Mammary epithelial cell (primary cell): ENCODE measurements at regions of chr19 and their contacts with region 1.

Region 1: DNA sequence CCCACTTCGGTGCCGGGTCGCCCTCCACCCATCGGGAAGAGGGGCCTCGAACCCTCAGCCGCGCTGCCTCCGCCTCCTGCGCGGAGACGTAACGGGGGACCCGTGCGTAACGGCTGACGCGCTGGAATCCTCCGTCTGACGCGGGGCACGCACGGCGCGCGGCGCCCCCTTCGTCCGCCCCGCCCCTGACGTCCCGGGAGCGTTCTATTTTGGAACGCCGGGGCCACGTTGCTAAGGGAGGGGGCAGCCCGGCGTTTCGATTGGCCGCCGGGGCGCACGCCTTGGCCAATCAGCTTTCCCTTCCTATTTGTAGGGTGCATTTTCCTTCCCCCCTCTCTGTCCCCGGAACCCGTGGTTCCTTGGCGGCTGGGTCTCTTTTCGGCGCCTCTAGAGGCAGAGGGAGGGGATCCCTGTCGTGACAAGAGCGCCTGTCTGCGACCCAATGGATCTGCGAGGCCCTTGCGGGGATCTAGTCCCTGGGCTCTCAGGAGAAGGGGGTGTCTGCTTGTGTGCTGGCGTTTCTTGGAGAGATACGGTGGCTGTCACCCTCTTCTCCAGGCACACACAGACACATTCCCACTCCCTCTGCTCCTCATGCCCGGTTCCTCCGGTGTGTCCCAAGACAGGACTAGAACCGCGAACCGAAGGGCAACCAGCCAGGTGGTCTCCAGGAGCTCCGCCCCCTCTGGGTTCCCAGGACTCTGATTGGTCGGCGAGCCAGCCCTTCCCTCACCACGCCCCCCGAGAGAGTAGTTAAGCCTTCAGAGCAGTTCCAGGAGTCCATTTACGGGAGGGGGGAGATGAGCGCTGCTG is 1.5 kb downstream of the FOSB start:
- DNase-seq: peak; percentile 95
- H3K4me3 ChIP-seq: peak overlapping the region; percentile 61 to 96 (median 62)
- H3K27ac ChIP-seq: peak overlapping the region; percentile 94
- H3K4me1 ChIP-seq: peaks cover 16% of the 10 kb centered on the region
- H3K27me3 ChIP-seq: no peaks in the 10 kb centered on the region
- CTCF ChIP-seq: no peak

Region 2: DNA sequence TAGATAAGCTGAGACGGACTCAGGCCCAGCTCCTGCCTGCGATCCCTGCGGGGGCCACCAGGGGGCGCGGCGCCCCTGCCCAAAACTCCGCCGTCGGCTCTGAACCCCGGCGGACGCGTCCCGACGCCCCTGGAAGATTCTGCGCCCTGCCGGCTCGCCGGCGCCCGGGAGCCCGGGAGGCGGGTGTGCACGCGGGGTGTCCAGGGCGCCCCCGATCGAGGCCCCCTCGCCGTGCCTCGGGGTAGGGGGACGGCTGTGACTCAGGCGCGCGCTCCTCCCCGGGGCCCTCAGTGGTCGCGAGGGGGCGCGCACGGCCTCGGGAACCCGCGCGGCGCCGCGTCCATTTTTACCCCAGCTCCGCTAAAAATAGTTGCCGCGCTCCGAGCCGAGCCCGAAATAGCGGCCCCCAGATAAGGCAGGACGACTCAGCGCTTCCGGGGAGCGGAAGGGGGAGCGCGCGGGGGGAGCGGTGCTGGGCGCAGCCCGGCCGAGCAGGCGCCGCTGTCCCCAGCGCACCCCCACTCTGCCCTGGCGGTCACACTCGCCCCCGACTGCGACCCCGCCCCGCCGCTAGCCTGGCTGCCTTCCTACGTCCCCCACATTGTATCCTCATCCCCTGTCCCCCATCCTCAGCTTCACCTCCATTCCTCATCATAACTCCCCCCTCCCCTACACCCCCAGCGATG is 29.6 kb before region 1 on chr19:
- CTCF ChIA-PET with region 1: interaction called, 14 read pairs
- dilution Hi-C with region 1: no loop called
- in situ Hi-C with region 1: no loop called
- intact Hi-C with region 1: loop called (anchors 1 kb)
- DNase-seq: peak; percentile 63
- H3K4me3 ChIP-seq: peak overlapping the region; percentile 55 to 58 (median 58)
- H3K27ac ChIP-seq: peak overlapping the region; percentile 61
- H3K4me1 ChIP-seq: peaks cover 14% of the 10 kb centered on the region
- H3K27me3 ChIP-seq: no peaks in the 10 kb centered on the region
- CTCF ChIP-seq: peak; percentile 84 to 88

Region 3: DNA sequence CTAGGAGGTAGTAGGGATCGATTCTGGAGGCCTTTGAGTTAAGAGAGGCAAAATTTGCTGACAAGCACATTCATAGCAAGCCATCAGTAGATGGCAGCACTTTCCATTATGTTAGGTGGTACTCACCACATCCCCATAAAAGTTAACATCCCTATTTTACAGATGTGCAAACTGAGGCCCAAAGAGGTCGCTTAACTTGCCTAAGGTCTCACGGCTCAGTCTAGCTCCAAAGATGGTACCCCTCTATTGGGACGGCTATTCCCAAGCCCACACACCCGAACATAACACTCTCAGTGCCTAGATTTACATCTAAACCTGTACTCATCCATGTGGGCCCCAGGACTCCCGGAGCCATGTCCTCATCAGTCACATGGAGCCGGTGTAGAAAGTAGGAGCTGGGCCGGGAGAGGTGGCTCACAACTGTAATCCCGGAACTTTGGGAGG is 23.0 kb before region 1 on chr19:
- CTCF ChIA-PET with region 1: no interaction called
- dilution Hi-C with region 1: no loop called
- in situ Hi-C with region 1: no loop called
- intact Hi-C with region 1: loop called (anchors 1 kb)
- DNase-seq: peak; percentile 38
- H3K4me3 ChIP-seq: no peak overlapping the region
- H3K27ac ChIP-seq: peak overlapping the region; percentile 97
- H3K4me1 ChIP-seq: peaks cover 56% of the 10 kb centered on the region
- H3K27me3 ChIP-seq: no peaks in the 10 kb centered on the region
- CTCF ChIP-seq: peak; percentile 31 to 42

Region 4: DNA sequence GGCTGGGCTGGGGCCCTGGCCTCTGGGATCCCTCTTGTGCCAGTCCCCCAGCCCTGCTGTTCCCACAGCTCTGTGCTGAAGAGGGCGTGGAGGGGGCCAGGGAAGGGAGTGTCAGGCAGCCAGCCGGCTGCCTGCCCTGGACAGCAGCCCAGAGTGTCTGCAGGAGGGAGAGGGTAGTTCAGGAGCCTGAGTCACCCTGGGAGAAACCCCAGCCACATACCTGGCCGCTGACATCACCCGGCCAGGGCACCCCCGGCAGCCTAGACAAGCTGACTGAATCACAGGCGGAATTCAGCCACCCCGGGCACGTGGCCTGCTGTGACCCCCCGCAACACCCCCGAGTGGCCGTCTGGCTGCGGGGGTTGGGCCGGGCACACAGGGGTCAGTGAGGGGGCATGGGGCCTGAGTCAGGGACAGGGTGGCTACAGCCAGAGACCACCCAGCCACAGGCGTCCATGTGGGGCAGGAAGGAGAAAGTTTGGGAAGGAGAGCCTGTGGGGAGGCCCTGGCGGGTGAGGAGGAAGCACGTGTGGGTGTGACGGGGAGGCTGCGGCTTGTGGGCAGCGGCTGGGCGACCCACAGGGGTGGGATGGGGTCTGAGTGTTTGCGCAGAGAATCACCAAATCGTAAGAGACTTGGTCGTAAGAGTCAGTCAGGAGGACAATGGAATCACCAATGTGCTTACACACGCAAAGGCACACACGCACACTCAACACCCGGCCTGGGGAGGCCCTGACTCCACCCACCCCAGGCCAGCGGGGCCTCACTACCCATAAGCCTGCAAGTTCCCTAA is 13.4 kb before region 1 on chr19:
- CTCF ChIA-PET with region 1: no interaction called
- dilution Hi-C with region 1: no loop called
- in situ Hi-C with region 1: no loop called
- intact Hi-C with region 1: loop called (anchors 1 kb)
- DNase-seq: peak; percentile 98
- H3K4me3 ChIP-seq: peak overlapping the region in 1 of 3 experiments; percentile 23
- H3K27ac ChIP-seq: peak overlapping the region; percentile 79
- H3K4me1 ChIP-seq: peaks cover 26% of the 10 kb centered on the region
- H3K27me3 ChIP-seq: no peaks in the 10 kb centered on the region
- CTCF ChIP-seq: no peak

Region 5: DNA sequence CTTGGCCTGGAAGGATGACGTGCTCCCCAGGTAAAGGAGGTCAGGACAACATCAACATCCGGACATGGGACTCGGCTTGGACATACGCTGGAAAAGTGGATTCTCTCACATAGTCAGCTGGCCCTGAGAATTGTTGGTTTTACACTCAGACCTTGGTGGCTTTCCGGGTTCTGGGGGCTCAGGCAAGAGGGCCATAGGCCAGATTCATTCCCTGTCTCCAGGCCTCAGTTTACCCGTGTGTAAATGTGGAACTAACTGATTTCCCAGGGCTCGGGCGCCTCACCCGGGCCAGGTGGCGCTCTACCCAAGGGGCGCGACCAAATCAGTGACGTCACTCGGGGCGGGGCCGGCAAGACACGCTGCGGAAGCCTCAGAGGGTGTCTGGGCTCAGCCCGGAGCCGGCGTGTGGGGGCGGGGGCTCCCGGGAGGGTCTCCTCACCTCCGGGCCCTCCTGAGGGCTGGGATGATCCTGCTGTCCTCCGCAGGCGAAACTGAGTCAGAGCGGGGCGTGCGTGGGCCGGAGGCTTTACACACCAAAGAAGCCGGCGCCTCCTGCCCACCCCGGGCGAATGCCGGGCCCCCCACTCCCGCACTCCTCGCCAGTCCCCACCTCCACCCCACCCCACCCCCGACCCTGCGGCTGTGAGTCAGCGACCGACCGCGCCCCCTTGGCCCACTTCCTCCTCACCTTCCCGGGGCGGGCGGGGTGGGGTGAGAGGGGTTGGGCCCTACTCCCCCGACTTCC is 37.1 kb after region 1 on chr19:
- CTCF ChIA-PET with region 1: no interaction called
- dilution Hi-C with region 1: no loop called
- in situ Hi-C with region 1: no loop called
- intact Hi-C with region 1: loop called (anchors 2 kb)
- DNase-seq: peak; percentile 94
- H3K4me3 ChIP-seq: peak overlapping the region; percentile 78 to 95 (median 90)
- H3K27ac ChIP-seq: peak overlapping the region; percentile 90
- H3K4me1 ChIP-seq: peaks cover 17% of the 10 kb centered on the region
- H3K27me3 ChIP-seq: no peaks in the 10 kb centered on the region
- CTCF ChIP-seq: peak; percentile 17 to 69